Cardiac septum (tissue), 1 donor: ENCODE measurements at regions of chr1 and their contacts with region 1.

Region 1: GRCh38 chr1:174097426-174097825 is 61.9 kb upstream of the RABGAP1L start:
- DNase-seq: no peak

Region 2: DNA sequence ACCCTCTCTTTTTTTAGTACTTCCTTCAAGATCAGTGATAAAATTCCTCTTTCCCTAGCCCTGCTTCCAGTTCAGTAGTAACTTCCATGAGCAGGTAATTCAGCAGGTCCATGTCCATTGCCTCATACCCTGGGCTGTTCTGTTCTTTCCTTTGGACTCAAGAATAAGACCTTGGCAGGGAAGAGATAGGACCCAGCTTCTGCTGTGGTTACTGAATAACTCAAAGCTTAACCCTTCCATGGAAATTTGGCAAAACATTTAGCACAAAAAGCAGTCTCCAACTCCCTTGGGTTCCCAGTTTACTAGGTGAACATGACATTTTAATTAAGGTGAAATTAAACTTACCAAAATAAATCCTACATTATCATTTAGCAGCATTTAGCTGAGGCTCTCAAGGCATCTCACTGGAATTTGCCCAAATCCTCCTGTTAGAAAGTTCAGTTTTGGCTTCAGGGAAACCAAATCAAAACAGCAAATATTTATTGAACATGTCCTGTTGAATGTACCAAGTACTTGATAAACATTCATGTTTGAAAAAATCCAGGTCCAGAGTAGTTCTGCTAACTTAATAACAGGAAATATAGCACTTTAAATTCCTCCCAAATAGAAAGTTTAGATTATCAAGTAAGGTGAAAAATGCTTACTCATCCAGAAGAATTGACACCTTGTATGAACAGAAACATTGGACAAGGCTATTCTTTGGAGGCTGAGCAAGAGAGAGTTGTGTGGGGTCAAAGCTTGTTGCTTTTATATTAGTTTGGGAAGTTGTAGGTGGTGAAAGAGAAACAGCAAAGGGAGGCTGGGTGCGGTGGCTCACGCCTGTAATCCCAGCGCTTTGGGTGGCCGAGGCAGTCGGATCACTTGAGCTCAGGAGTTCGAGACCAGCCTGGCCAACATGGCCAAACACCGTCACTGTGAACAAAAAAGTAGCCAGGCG is 171.9 kb before region 1 on chr1:
- intact Hi-C with region 1: no loop called
- DNase-seq: no peak

Region 3: DNA sequence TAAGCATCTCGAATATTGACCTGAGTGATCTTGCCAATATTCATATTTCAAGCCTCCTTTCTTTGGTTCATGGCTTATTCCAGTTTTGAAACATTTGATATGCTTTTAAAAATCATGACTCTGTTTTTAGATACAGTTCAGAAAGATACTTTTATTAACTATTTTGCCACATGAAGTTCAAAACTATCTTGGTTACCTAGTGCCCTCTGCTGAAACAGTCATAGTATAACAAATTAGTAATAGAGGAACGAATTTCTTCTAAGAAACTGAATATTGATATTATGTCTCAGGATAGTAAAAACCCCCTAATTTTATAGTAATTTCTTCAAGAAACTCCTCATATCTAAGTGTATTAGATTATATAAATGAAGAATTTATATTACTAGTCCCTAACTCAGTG is 22.7 kb before region 1 on chr1:
- intact Hi-C with region 1: no loop called
- DNase-seq: no peak

Region 4: DNA sequence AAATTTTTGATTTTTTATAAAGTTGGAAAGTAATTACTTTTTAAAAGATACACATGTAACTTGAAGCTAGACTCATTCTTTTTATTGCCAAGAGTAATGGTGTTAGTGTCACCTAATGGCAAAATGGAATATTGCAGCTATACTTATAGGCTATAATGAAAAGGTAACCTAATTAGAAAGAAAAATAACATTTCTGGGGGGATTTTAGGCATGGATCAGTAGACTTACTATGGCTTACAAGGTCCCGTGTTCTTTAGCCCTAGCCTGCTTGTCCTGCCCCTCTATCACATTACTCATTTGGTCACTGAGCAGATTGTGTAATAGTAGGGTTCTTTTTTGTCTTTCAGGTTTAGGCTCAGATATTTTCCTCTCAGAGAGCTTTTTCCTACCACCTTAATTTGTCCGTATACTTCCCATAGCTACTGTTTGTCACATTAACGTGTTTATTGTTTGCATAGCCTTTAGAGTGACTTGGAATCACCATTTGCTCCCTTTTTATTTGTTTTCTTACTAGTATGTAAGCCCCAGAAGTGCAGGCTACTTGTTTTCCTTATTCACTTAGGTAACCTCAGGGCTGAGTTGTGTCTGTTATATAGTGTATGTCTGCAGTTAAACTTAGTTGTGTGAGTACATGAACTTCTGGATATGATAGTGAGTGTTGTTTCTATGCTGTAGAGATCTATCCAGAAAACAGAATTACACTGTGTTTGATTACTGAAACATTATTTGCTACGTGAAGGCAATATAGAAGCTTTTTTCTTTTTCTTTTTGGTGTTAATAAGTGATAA is 120.6 kb after region 1 on chr1:
- intact Hi-C with region 1: loop called (anchors 2 kb)
- DNase-seq: no peak

Region 5: GRCh38 chr1:174743654-174744561 is 646.5 kb after region 1 on chr1:
- intact Hi-C with region 1: loop called (anchors 5 kb)
- DNase-seq: no peak